ENCODE measurements at regions of chr15 and their contacts with region 1.

Region 1: DNA sequence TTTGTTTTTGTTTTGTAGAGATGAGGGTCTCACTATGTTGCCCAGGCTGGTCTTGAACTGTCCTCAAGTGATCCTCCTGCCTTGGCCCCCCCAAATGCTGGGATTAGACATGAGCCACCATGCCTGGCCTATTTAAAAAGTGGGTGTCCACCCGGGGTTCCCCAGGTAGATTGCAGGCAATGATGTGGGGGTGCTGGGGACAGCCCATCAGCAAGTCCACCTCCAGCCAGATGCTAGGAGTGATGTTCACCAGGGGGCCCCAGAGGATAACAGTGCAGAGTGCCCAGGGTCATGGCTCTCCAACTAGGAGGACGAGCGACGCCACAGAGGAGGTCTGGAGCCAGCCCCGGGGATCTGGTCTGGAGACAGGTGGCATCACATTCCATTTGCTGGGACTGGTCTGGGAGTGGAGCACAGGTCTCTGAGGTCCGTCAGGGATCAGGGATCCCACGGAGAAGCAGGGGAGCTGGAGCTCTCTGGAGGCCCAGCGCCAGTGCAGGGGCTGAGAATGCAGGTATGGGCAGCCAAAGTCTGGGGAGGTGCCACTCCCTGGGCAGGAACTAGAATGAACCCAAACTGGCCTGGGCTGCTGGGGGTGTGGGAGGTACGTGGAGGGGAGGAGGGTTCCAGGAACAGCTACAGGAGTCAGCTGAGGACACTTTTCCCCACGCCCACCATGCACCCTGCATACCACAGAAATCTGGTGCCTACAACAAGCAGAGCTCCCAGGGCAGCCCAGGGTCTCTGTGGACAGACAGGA is 51.2 kb upstream of the PCSK6 start:
- DNase-seq: no peak
- ATAC-seq: peak; percentile 64 to 90 (median 80)
- H3K4me3 ChIP-seq: no peak overlapping the region
- H3K27ac ChIP-seq: no peak overlapping the region
- H3K4me1 ChIP-seq: no peaks in the 10 kb centered on the region
- H3K27me3 ChIP-seq: peaks cover 0 to 10% (median 0%) of the 10 kb centered on the region in 3 donors
- CTCF ChIP-seq: no peak

Region 2: DNA sequence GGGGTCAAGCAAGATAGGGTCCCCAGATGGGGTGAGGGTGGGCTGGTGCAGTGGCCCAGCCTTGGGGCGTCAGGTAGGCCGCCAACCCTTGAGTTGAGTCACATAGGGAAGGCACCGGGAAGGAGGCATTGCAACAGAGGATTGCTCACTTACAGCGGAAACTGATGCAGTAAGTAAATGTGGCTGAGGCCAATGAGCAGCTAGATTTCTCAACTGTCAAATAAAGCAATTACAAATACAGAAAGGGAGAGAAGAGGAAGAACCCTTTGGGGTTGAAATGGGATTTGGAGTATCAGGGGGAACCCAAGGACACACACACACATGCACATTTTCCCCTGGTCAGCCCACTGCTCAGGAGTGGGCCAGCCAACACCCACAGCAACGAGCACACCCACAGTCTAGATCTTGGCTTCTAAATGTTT is 332.8 kb before region 1 on chr15:
- intact Hi-C with region 1: no loop called
- DNase-seq: peak in 1 of 2 donors; percentile 54
- ATAC-seq: peak; percentile 25 to 74 (median 57)
- H3K4me3 ChIP-seq: no peak overlapping the region
- H3K27ac ChIP-seq: no peak overlapping the region
- H3K4me1 ChIP-seq: peaks cover 29% of the 10 kb centered on the region
- H3K27me3 ChIP-seq: no peaks in the 10 kb centered on the region
- CTCF ChIP-seq: no peak

Region 3: DNA sequence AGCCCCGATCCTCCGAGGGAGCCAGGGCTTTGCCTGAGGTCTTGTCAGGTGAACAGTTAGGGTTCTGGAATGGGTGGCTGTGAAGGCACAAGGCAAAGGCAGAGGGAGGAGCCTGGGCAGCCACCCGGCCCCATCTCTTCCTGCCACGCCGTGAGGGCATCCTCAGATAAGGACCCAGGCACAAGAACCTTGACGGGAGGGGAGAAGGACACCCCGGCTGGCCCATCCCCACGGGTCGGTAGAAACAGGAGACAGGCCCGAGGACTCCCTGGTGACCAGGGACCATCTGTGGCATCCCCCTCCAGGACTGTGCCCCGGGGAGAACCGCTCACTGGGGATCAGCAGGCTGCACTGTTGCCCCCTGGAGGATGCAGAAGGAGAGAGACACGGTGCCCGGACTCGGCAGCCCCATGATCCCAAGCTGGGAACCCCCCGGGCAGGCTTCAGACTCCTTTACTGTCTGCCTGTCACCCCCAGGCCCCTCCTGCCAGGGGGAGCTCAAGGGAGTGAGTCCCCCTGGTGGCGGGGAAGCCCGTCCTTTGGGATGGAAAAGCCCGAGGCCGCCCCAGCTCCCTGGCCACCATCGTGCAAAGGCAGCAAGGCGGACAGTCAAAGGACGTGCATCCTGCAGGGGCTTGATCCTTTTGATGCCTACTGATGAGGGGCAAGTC is 38.8 kb before region 1 on chr15:
- intact Hi-C with region 1: no loop called
- DNase-seq: peak; percentile 43 to 67
- ATAC-seq: peak in 3 of 4 donors; percentile 29 to 47 (median 45)
- H3K4me3 ChIP-seq: no peak overlapping the region
- H3K27ac ChIP-seq: peak overlapping the region; percentile 85
- H3K4me1 ChIP-seq: peaks cover 35% of the 10 kb centered on the region
- H3K27me3 ChIP-seq: peaks cover 0 to 4% (median 0%) of the 10 kb centered on the region in 3 donors
- CTCF ChIP-seq: peak; percentile 29

Region 4: DNA sequence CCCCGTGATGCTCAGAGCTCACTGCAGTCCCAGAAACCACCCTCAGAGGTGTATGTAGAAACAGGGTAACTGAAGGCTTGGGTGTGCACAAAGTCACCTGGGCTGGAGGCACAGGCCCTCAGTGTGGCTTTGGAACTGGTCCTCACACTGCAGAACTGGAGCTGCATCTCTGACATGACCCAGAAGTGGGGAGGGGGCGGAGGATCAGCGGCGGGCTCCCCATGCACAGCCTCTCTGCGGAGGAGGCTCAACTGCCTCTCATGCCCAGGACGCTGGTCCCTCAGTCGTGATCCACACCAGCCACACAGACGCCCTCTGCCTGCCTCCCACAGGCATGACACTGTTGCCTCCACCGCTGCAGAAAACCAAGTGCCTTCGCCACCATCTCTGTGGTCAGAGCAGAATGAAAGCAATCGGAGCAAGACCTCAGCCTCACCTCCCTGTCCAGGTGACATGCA is 37.8 kb after region 1 on chr15:
- intact Hi-C with region 1: no loop called
- DNase-seq: peak in 1 of 2 donors; percentile 40
- ATAC-seq: peak in 3 of 4 donors; percentile 78 to 84 (median 82)
- H3K4me3 ChIP-seq: no peak overlapping the region
- H3K27ac ChIP-seq: no peak overlapping the region
- H3K4me1 ChIP-seq: no peaks in the 10 kb centered on the region
- H3K27me3 ChIP-seq: peaks cover 0 to 5% (median 3%) of the 10 kb centered on the region in 3 donors
- CTCF ChIP-seq: peak; percentile 51

Region 5: GRCh38 chr15:101652098-101652782 is 111.6 kb after region 1 on chr15 and contains the start of gene TM2D3:
- intact Hi-C with region 1: loop called in 1 of 2 experiments (anchors 10 kb)
- DNase-seq: peak; percentile 96 to 97
- ATAC-seq: peak; percentile 94 to 95 (median 94)
- H3K4me3 ChIP-seq: peak within 1 kb of the TSS; percentile 76
- H3K27ac ChIP-seq: peak within 1 kb of the TSS; percentile 95
- H3K4me1 ChIP-seq: peaks cover 31% of the 10 kb centered on the region
- H3K27me3 ChIP-seq: no peaks in the 10 kb centered on the region
- CTCF ChIP-seq: peak; percentile 81
- total RNA-seq, gene TM2D3: 34.8 to 46.9 (median 41.3) TPM